Transverse colon (tissue), 4 donors: ENCODE measurements at regions of chr18 and their contacts with region 1.

Region 1: GRCh38 chr18:10878703-10879102 is 270.7 kb downstream of the PIEZO2 start:
- DNase-seq: peak; percentile 40
- H3K4me3 ChIP-seq: no peak overlapping the region
- H3K27ac ChIP-seq: no peak overlapping the region
- H3K4me1 ChIP-seq: no peaks in the 10 kb centered on the region
- H3K27me3 ChIP-seq: no peaks in the 10 kb centered on the region
- CTCF ChIP-seq: no peak
- EP300 ChIP-seq: no peak
- POLR2A ChIP-seq: no peak

Region 2: DNA sequence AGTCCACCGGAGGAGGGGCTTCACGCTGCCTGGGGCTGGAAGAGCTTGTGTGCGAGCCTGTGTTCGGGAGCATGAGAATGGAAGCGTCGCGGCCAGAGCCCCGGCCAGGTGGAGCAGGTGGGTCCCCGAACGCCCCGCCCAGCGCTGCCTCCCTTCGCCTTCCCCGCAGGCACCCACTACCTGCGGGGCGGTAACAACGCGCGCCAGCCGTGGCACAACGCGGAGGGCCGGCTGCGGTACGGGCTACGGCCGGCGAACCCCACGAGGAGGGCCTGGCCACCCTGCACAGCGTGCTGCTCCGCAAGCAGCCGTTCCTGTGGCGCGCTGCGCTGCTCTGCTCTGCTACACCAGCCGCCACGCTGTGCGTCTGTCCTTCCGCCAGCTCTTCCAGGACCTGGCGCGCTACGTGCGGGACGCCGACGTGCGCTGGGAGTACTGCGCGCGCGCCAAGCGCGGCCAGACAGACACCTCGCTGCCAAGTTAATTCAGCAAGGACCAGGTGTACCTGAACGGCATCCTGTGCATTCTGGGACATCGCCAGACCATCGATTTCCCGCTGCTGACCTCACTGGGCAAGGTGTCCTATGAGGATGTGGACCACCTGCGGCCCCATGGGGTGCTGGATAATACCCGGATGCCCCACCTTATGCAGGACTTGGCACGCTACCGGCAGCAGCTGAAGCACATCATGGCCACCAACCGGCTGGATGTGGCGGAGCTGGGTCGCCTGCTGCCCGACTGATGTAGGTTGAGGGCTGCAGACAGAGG is 152.3 kb before region 1 on chr18:
- in situ Hi-C with region 1: no loop called
- intact Hi-C with region 1: no loop called
- DNase-seq: no peak
- H3K4me3 ChIP-seq: no peak overlapping the region
- H3K27ac ChIP-seq: no peak overlapping the region
- H3K4me1 ChIP-seq: no peaks in the 10 kb centered on the region
- H3K27me3 ChIP-seq: no peaks in the 10 kb centered on the region
- CTCF ChIP-seq: no peak
- EP300 ChIP-seq: no peak
- POLR2A ChIP-seq: no peak

Region 3: GRCh38 chr18:10989486-10989885 is 110.8 kb after region 1 on chr18:
- in situ Hi-C with region 1: no loop called
- intact Hi-C with region 1: loop called (anchors 10 kb)
- DNase-seq: no peak
- H3K4me3 ChIP-seq: no peak overlapping the region
- H3K27ac ChIP-seq: no peak overlapping the region
- H3K4me1 ChIP-seq: no peaks in the 10 kb centered on the region
- H3K27me3 ChIP-seq: no peaks in the 10 kb centered on the region
- CTCF ChIP-seq: no peak
- EP300 ChIP-seq: no peak
- POLR2A ChIP-seq: no peak

Region 4: GRCh38 chr18:11019295-11020105 is 140.8 kb after region 1 on chr18:
- in situ Hi-C with region 1: no loop called
- intact Hi-C with region 1: no loop called
- DNase-seq: no peak
- H3K4me3 ChIP-seq: no peak overlapping the region
- H3K27ac ChIP-seq: no peak overlapping the region
- H3K4me1 ChIP-seq: peaks cover 0 to 2% (median 0%) of the 10 kb centered on the region in 4 donors
- H3K27me3 ChIP-seq: no peaks in the 10 kb centered on the region
- CTCF ChIP-seq: no peak
- EP300 ChIP-seq: no peak
- POLR2A ChIP-seq: no peak